H1 (cell line): ENCODE measurements at regions of chr6 and their contacts with region 1.

Region 1: GRCh38 chr6:31827286-31828079 is at the start of gene HSPA1B:
- DNase-seq: peak; percentile 98
- H3K4me3 ChIP-seq: peak within 1 kb of the TSS; percentile 55 to 75 (median 72)
- H3K27ac ChIP-seq: peak within 1 kb of the TSS; percentile 77
- H3K4me1 ChIP-seq: peaks cover 5 to 12% (median 9%) of the 10 kb centered on the region in 4 experiments; a peak in 6 of 7 replicates
- H3K27me3 ChIP-seq: no peaks in the 10 kb centered on the region
- CTCF ChIP-seq: no peak
- EP300 ChIP-seq: no peak
- POLR2A ChIP-seq: peak; percentile 99 to 100
- RAD21 ChIP-seq: no peak
- total RNA-seq, gene HSPA1B: 76.6 and 89.3 TPM in 2 replicates

Region 2: DNA sequence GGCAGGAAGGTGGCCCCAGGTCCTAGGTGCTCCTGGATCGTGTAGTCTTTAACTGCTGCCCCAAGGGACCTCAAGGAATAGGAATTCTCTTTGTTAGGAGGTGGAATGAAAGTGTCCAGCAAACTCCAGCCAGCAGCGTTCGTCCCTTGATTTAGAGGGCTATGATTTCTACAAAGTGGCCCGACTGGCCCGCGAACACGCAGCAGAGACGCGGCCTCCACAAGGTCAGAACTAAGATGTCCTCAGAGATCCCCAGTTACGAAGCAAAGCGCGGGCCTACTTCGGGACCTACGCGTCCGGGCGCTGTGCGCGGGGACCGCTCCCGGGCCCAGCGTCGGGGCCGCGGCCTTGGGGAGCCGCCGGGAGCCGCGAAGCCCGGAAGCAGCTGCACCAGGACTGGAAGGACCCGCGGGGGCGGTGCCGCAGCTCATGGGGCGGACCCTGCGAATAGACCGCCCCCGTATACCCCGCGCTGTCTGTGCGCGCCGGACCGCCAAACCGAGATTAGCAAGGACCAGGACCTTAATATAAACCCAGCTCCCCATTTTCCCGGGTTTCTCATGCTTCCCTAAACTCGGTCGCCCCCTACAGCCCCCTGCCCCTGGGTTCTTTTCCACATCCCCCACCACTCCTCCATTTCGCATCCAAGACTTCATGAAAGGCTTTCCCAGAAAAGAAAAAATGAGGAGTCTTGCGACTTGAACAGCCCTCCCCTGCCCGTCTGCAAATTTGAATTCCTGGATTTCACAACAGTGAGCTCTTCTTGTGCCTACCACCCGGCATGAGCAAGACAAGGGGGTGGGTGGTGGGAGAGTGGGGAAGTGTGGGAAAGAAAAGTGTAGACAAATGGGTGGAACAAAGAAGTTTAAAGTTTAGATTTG is 166.9 kb before region 1 on chr6 and contains the start of gene C6orf47:
- CTCF ChIA-PET with region 1: interaction called, 5 read pairs
- POLR2A ChIA-PET with region 1: interaction called, 14 read pairs
- DNase-seq: peak; percentile 59 to 90
- H3K4me3 ChIP-seq: peak within 1 kb of the TSS; percentile 85 to 94 (median 88)
- H3K27ac ChIP-seq: peak within 1 kb of the TSS; percentile 63
- H3K4me1 ChIP-seq: peaks cover 0 to 15% (median 4%) of the 10 kb centered on the region in 4 experiments; a peak in 5 of 7 replicates
- H3K27me3 ChIP-seq: no peaks in the 10 kb centered on the region
- CTCF ChIP-seq: no peak
- EP300 ChIP-seq: no peak
- POLR2A ChIP-seq: peak in 1 of 2 experiments; percentile 83; a peak in 2 of 3 replicates
- RAD21 ChIP-seq: peak in 1 of 2 experiments; percentile 3; a peak in 1 of 4 replicates
- total RNA-seq, gene C6orf47: 14.6 and 15.6 TPM in 2 replicates

Region 3: GRCh38 chr6:31769684-31770371 is 57.7 kb before region 1 on chr6:
- CTCF ChIA-PET with region 1: interaction called, 21 read pairs
- POLR2A ChIA-PET with region 1: interaction called, 6 read pairs
- DNase-seq: peak; percentile 63 to 96
- H3K4me3 ChIP-seq: no peak overlapping the region
- H3K27ac ChIP-seq: no peak overlapping the region
- H3K4me1 ChIP-seq: peaks cover 0 to 5% (median under 1%) of the 10 kb centered on the region in 4 experiments; a peak in 4 of 7 replicates
- H3K27me3 ChIP-seq: no peaks in the 10 kb centered on the region
- CTCF ChIP-seq: peak in 2 of 3 experiments; percentile 85 to 95; a peak in 3 of 4 replicates
- EP300 ChIP-seq: no peak
- POLR2A ChIP-seq: no peak
- RAD21 ChIP-seq: peak; percentile 73 to 75

Region 4: GRCh38 chr6:31795616-31796298 is 31.7 kb before region 1 on chr6 and contains the start of gene VARS1:
- CTCF ChIA-PET with region 1: interaction called, 27 read pairs
- POLR2A ChIA-PET with region 1: interaction called, 81 read pairs
- DNase-seq: peak in 1 of 2 experiments; percentile 96
- H3K4me3 ChIP-seq: peak within 1 kb of the TSS; percentile 82 to 95 (median 90)
- H3K27ac ChIP-seq: peak within 1 kb of the TSS; percentile 99
- H3K4me1 ChIP-seq: peaks cover 0 to 2% (median under 1%) of the 10 kb centered on the region in 4 experiments; a peak in 3 of 7 replicates
- H3K27me3 ChIP-seq: no peaks in the 10 kb centered on the region
- CTCF ChIP-seq: peak; percentile 92 to 99 (median 94)
- EP300 ChIP-seq: peak in 1 of 2 experiments; percentile 44; a peak in 1 of 3 replicates
- POLR2A ChIP-seq: peak in 1 of 2 experiments; percentile 72; a peak in 2 of 3 replicates
- RAD21 ChIP-seq: peak; percentile 71 to 79
- total RNA-seq, gene VARS1: 162 and 163 TPM in 2 replicates

Region 5: DNA sequence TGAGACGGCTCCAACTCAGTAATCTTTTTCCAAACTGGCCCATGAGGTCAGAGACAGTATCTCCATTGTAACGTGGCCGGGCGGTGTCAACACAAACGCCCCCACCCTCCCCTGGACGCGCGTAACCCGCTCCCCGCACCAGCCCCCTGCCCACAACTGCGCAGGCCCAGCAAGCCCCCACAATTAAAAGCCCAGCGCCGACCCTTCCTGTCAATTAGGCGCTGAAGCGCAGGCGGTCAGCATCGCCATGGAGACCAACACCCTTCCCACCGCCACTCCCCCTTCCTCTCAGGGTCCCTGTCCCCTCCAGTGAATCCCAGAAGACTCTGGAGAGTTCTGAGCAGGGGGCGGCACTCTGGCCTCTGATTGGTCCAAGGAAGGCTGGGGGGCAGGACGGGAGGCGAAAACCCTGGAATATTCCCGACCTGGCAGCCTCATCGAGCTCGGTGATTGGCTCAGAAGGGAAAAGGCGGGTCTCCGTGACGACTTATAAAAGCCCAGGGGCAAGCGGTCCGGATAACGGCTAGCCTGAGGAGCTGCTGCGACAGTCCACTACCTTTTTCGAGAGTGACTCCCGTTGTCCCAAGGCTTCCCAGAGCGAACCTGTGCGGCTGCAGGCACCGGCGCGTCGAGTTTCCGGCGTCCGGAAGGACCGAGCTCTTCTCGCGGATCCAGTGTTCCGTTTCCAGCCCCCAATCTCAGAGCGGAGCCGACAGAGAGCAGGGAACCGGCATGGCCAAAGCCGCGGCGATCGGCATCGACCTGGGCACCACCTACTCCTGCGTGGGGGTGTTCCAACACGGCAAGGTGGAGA is 12.3 kb before region 1 on chr6 and contains the starts of genes HSPA1A and HSPA1L:
- CTCF ChIA-PET with region 1: interaction called, 11 read pairs
- POLR2A ChIA-PET with region 1: interaction called, 119 read pairs
- DNase-seq: peak; percentile 91 to 93
- H3K4me3 ChIP-seq: peak within 1 kb of the TSS; percentile 54 to 77 (median 65)
- H3K27ac ChIP-seq: peak within 1 kb of the TSS; percentile 37; the same call in 1 of the 2 replicates
- H3K4me1 ChIP-seq: peaks cover 0 to 5% (median 3%) of the 10 kb centered on the region in 4 experiments; a peak in 5 of 7 replicates
- H3K27me3 ChIP-seq: no peaks in the 10 kb centered on the region
- CTCF ChIP-seq: no peak
- EP300 ChIP-seq: no peak
- POLR2A ChIP-seq: peak; percentile 97
- RAD21 ChIP-seq: no peak
- total RNA-seq, gene HSPA1A: 54.0 and 59.9 TPM in 2 replicates
- total RNA-seq, gene HSPA1L: 1.6 and 1.9 TPM in 2 replicates

Region 6: GRCh38 chr6:31862344-31863227 is 35.1 kb after region 1 on chr6 and contains the start of gene NEU1:
- CTCF ChIA-PET with region 1: interaction called, 5 read pairs
- POLR2A ChIA-PET with region 1: interaction called, 17 read pairs
- DNase-seq: peak; percentile 97 to 99
- H3K4me3 ChIP-seq: peak within 1 kb of the TSS; percentile 73 to 96 (median 78)
- H3K27ac ChIP-seq: peak within 1 kb of the TSS; percentile 31; the same call in 1 of the 2 replicates
- H3K4me1 ChIP-seq: peaks cover 0 to 12% (median 0%) of the 10 kb centered on the region in 4 experiments; a peak in 4 of 7 replicates
- H3K27me3 ChIP-seq: 0 out of 7 replicates have a peak, but pooled peaks cover 0 to 3% (median 0%) of the 10 kb centered on the region in 4 experiments
- CTCF ChIP-seq: no peak
- EP300 ChIP-seq: no peak
- POLR2A ChIP-seq: peak; percentile 79 to 90
- RAD21 ChIP-seq: no peak
- total RNA-seq, gene NEU1: 41.2 and 43.4 TPM in 2 replicates